Heart left ventricle (tissue), 16 donors: ENCODE measurements at regions of chr10 and their contacts with region 1.

Region 1: GRCh38 chr10:89301721-89302445 is at the start of gene IFIT2:
- DNase-seq: peak; percentile 35 to 58 (median 44)
- ATAC-seq: peak; percentile 67 to 86 (median 82)
- H3K4me3 ChIP-seq: peak within 1 kb of the TSS; percentile 20 to 71 (median 56)
- H3K27ac ChIP-seq: peak within 1 kb of the TSS; percentile 74 to 97 (median 90)
- H3K4me1 ChIP-seq: peaks cover 0 to 50% (median 22%) of the 10 kb centered on the region in 12 donors
- H3K27me3 ChIP-seq: no peaks in the 10 kb centered on the region
- CTCF ChIP-seq: no peak
- POLR2A ChIP-seq: peak in 1 of 2 donors; percentile 42
- total RNA-seq, gene IFIT2: 2.3 to 30.2 (median 5.3) TPM

Region 2: DNA sequence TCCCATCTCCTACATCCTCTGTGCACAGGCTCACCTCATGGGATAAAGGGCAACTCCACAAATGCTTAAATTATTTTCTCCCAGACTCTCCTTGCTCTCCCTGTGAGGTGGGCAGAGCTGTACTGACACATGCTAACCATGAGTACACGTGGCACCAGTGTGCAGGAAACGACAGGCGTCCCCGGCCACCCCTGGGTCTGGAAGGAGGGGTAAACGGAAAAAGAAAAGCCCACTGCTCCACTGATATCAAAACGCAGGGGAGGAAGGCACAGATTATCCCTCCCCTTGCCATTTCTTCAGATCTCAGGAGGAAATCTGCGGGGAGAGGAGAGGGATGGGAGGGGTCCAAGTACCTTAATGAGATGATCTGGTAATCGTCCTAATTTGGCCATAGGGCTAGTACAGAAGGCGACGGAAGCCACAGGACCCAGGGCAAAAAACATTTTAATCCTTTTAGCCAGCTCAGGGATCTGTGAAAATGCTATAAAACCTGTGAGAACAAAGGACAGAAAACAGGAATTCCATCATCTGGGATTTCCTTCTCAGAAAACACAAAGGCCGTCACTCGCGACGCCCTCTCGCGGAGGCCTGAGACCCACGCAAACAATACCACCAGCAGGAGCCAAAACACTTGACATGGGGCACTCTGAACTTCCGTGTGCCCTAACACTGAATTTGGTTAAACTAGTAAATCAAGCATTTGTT is 77.0 kb before region 1 on chr10:
- intact Hi-C with region 1: no loop called
- DNase-seq: peak; percentile 45 to 72 (median 55)
- ATAC-seq: peak; percentile 60 to 85 (median 63)
- H3K4me3 ChIP-seq: peak overlapping the region in 8 of 12 donors; percentile 11 to 42 (median 33)
- H3K27ac ChIP-seq: peak overlapping the region; percentile 56 to 89 (median 78)
- H3K4me1 ChIP-seq: peaks cover 0 to 15% (median 0%) of the 10 kb centered on the region in 12 donors
- H3K27me3 ChIP-seq: no peaks in the 10 kb centered on the region
- CTCF ChIP-seq: peak in 10 of 12 donors; percentile 17 to 70 (median 36)
- POLR2A ChIP-seq: no peak

Region 3: GRCh38 chr10:89355394-89355931 is 53.6 kb after region 1 on chr10:
- intact Hi-C with region 1: loop called in 1 of 10 experiments (anchors 5 kb)
- DNase-seq: no peak
- ATAC-seq: no peak
- H3K4me3 ChIP-seq: no peak overlapping the region
- H3K27ac ChIP-seq: peak overlapping the region in 1 of 12 donors; percentile 35
- H3K4me1 ChIP-seq: peaks cover 0 to 33% (median 21%) of the 10 kb centered on the region in 12 donors
- H3K27me3 ChIP-seq: no peaks in the 10 kb centered on the region
- CTCF ChIP-seq: no peak
- POLR2A ChIP-seq: no peak

Region 4: GRCh38 chr10:89414146-89414878 is 112.4 kb after region 1 on chr10 and contains the start of gene IFIT5:
- intact Hi-C with region 1: loop called in 1 of 10 experiments (anchors 10 kb)
- DNase-seq: peak; percentile 74 to 87 (median 78)
- ATAC-seq: peak; percentile 79 to 95 (median 92)
- H3K4me3 ChIP-seq: peak within 1 kb of the TSS; percentile 75 to 95 (median 86)
- H3K27ac ChIP-seq: peak within 1 kb of the TSS; percentile 92 to 99 (median 96)
- H3K4me1 ChIP-seq: peaks cover 0 to 53% (median 33%) of the 10 kb centered on the region in 12 donors
- H3K27me3 ChIP-seq: no peaks in the 10 kb centered on the region
- CTCF ChIP-seq: peak in 3 of 12 donors; percentile 23 to 30 (median 25)
- POLR2A ChIP-seq: peak in 1 of 2 donors; percentile 38
- total RNA-seq, gene IFIT5: 5.4 to 21.0 (median 10.4) TPM

Region 5: DNA sequence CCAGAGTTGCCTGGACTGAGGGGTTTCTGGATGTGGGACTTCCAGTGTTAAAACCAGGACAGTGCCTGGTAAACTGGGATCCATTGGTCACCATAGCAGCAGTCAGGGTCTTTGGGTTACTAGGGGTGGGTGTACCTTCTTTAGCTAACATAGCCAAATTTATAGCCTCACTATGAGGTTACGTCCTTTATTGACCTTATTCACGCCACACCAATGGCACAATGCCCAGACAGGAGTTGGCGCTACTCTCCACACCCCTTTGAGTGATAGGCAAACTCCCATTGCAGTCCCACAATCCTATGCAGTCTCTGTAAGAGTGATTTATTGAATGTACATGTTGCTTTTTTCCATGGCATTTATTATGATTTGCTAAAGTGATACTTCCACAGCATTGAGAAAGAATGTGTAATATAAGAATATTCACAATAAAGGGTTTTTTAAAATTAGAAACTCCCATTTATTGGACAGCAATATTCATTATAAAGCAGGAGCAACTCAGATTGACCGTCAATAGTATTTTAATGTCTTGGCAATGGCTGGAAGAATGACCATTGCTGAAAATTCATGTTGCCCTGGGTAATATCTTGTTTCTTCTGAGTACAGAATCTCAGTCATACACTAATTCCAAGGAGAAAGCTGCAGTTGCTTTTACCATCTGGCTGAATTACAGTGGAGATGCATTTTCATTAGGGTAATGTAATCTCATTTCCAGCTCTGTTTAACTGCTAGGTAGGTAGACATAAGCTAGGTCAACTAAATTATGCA is 138.5 kb after region 1 on chr10:
- intact Hi-C with region 1: no loop called
- DNase-seq: peak; percentile 31 to 78 (median 66)
- ATAC-seq: peak in 3 of 4 donors; percentile 93 to 95 (median 94)
- H3K4me3 ChIP-seq: no peak overlapping the region
- H3K27ac ChIP-seq: peak overlapping the region in 1 of 12 donors; percentile 11
- H3K4me1 ChIP-seq: peaks cover 0 to 4% (median 0%) of the 10 kb centered on the region in 12 donors
- H3K27me3 ChIP-seq: no peaks in the 10 kb centered on the region
- CTCF ChIP-seq: no peak
- POLR2A ChIP-seq: no peak